ENCODE measurements at regions of chr20 and their contacts with region 1.

Region 1: DNA sequence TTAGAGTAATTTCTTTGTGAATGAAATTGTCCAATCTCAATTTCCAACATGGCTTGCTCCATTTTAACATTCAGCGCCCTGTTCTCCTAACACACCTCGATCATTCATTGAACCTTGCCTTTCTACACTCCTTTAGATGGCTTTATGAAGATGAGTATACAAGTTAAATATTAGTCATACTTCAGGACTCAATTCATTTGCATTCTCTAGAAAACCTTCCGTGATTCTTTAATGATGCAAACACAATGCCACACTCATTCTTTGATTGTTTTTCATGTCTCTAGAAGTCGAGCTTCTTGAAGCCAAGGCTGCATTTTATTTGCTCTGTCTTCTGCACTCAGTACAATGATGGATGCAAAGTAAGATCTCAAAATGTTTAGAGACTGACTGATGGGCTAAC is 641.2 kb downstream of the DOK5 start:
- DNase-seq: no peak
- H3K4me3 ChIP-seq: no peak overlapping the region
- H3K4me3 Mint-ChIP-seq: no peak overlapping the region
- H3K27ac ChIP-seq: no peak overlapping the region
- H3K27ac Mint-ChIP-seq: no peak overlapping the region
- H3K4me1 ChIP-seq: no peaks in the 10 kb centered on the region
- H3K4me1 Mint-ChIP-seq: no peaks in the 10 kb centered on the region
- H3K27me3 ChIP-seq: no peaks in the 10 kb centered on the region
- H3K27me3 Mint-ChIP-seq: no peaks in the 10 kb centered on the region

Region 2: DNA sequence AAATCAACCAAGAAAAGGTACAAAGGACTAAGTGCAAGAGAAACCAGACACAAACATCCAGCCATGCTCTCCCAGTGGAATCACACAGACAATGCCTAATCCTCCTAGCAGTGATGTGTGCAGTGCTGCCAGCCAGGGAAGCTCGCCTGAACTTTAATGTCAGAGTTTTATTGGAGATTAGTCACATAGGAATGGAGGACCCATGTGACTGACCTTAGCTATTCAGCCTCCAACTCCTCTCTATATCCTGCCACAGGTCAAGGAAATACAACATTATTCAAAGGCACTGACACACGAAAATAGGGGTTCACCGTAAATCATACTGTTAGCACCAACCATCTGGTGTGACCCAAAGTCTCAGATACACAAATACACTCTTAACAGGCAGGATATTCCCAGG is 43.4 kb after region 1 on chr20:
- CTCF ChIA-PET with region 1: no interaction called
- POLR2A ChIA-PET with region 1: no interaction called
- intact Hi-C with region 1: loop called (anchors 2 kb)
- DNase-seq: no peak
- H3K4me3 ChIP-seq: no peak overlapping the region
- H3K4me3 Mint-ChIP-seq: no peak overlapping the region
- H3K27ac ChIP-seq: no peak overlapping the region
- H3K27ac Mint-ChIP-seq: no peak overlapping the region
- H3K4me1 ChIP-seq: no peaks in the 10 kb centered on the region
- H3K4me1 Mint-ChIP-seq: no peaks in the 10 kb centered on the region
- H3K27me3 ChIP-seq: no peaks in the 10 kb centered on the region
- H3K27me3 Mint-ChIP-seq: no peaks in the 10 kb centered on the region

Region 3: GRCh38 chr20:55229451-55229850 is 112.9 kb after region 1 on chr20:
- CTCF ChIA-PET with region 1: no interaction called
- POLR2A ChIA-PET with region 1: no interaction called
- intact Hi-C with region 1: no loop called
- DNase-seq: no peak
- H3K4me3 ChIP-seq: no peak overlapping the region
- H3K4me3 Mint-ChIP-seq: no peak overlapping the region
- H3K27ac ChIP-seq: no peak overlapping the region
- H3K27ac Mint-ChIP-seq: no peak overlapping the region
- H3K4me1 ChIP-seq: no peaks in the 10 kb centered on the region
- H3K4me1 Mint-ChIP-seq: no peaks in the 10 kb centered on the region
- H3K27me3 ChIP-seq: no peaks in the 10 kb centered on the region
- H3K27me3 Mint-ChIP-seq: no peaks in the 10 kb centered on the region